Dorsolateral prefrontal cortex (tissue), 120 donors: ENCODE measurements at regions of chr19 and their contacts with region 1.

Region 1: DNA sequence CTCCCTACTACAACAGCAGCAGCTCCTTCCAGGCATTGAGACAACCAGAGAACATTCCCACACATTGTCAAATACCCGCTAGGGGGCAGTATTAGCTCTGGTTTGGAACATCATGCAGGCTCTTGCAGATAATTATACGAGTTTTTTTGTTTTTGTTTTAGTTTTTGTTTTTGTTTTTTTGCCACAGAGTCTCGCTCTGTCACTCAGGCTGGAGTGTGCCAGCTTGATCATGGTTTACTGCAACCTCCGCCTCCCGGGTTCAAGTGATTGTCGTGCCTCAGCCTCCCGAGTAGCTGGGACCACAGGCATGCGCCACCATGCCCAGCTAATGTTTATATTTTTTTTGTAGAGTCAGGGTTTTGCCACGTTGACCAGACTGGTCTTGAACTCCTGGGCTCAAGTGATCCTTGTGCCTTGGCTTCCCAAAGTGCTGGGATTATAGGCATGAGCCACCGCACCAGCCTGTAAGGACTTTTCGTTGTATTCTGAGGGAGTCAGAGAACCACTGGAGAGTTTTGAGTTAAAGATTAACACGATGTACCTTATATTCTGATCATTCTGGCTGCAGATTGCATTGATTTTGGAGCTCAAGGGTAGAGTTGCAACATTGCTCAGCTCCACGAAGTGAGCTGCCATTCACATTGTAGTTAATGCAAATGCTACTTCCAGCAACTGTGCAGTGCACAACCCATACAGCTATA is 41.7 kb upstream of the CEACAM20 start:
- DNase-seq: peak in 5 of 10 donors; percentile 18 to 75 (median 41)
- H3K4me3 ChIP-seq: no peak overlapping the region
- H3K27ac ChIP-seq: no peak overlapping the region
- H3K27me3 ChIP-seq: peaks cover 0 to 11% (median 0%) of the 10 kb centered on the region in 45 donors
- CTCF ChIP-seq: peak; percentile 36 to 84 (median 73)

Region 2: GRCh38 chr19:44657211-44657921 is 86.2 kb after region 1 on chr19:
- intact Hi-C with region 1: loop called (anchors 2 kb)
- DNase-seq: peak in 8 of 10 donors; percentile 31 to 55 (median 38)
- H3K4me3 ChIP-seq: no peak overlapping the region
- H3K27ac ChIP-seq: no peak overlapping the region
- H3K27me3 ChIP-seq: no peaks in the 10 kb centered on the region
- CTCF ChIP-seq: peak; percentile 56 to 94 (median 85)